ENCODE measurements at regions of chr6 and their contacts with region 1.

Region 1: DNA sequence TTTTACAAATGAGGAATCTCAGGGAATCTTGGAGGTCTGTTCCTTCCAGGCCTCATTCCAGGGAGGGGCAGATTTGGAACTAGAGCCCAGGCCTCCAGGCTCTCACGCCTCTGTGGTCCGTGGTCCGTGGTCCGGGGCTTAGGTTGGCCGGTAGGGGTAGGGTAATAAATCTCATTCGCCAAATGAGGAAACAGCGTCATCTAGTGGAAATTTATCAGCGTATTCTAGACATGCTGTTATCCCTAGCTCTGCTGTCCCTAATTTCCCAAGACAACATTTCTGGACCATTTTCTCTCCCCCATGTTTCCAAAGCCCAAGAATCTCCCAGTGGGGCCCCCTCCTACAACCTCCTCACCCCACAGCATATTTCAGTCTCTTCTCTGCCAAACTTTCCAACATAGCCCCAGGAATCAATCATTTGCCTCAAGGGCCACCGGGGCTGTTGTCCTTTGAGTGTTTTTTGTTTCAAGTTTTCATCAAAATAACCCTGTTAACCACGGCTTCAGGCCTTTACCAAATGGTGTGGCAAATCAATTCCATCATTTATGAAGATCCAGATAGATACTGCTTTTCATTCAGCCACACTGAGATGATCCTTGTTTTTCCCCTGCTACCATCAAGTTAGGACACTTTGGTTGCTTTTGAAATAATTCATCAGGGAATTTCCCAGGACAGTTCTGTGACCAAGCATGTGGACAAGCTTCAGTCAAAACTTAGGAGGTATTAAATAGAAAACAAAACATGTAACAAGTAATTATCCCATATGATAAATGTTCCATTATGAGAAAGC is 126.8 kb downstream of the ALDH8A1 start:
- DNase-seq: peak; percentile 88
- H3K4me3 Mint-ChIP-seq: no peak overlapping the region
- H3K27ac Mint-ChIP-seq: no peak overlapping the region
- H3K4me1 Mint-ChIP-seq: peaks cover 27% of the 10 kb centered on the region
- H3K27me3 Mint-ChIP-seq: no peaks in the 10 kb centered on the region
- CTCF ChIP-seq: peak; percentile 82

Region 2: DNA sequence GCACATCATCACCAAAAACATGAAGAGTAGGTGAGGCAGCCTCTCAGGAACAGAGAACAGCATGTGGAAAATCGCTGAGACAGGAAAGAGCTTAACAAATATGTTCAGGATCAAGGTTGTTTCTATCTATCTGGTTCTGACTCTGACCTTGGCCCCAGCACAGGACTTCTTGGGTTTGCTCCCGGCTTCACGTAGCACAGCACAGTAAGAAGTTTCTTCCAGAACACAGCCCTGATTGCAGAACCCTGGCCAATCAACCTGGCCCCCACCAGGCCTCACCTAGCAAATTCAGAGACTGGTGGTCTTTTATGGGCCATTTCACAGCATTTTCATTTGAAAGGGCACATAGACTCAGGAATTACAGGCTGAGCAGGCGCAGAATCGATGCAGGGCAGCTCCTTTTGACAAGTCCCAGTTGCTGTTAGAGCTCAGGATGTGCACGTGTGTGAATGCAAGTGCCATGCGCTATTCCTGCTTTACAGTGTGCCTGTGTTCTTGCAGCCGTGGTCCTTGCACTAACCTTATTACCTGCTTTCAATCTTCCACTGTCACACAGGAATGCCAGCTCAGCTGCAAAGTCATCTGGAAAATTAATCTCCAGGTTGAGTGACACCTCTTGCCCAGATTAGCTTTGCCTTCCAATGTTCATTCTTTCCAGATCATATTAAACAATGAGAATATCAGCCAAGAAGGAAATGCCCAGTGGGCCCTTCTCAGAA is 670.2 kb before region 1 on chr6:
- CTCF ChIA-PET with region 1: interaction called, 84 read pairs
- POLR2A ChIA-PET with region 1: interaction called, 6 read pairs
- intact Hi-C with region 1: loop called (anchors 1 kb)
- DNase-seq: no peak
- H3K4me3 Mint-ChIP-seq: no peak overlapping the region
- H3K27ac Mint-ChIP-seq: no peak overlapping the region
- H3K4me1 Mint-ChIP-seq: no peaks in the 10 kb centered on the region
- H3K27me3 Mint-ChIP-seq: no peaks in the 10 kb centered on the region
- CTCF ChIP-seq: no peak

Region 3: GRCh38 chr6:134174672-134175198 is 648.4 kb before region 1 on chr6:
- CTCF ChIA-PET with region 1: interaction called, 42 read pairs
- POLR2A ChIA-PET with region 1: interaction called, 15 read pairs
- intact Hi-C with region 1: loop called (anchors 1 kb)
- DNase-seq: peak; percentile 88
- H3K4me3 Mint-ChIP-seq: peak overlapping the region; percentile 95
- H3K27ac Mint-ChIP-seq: peak overlapping the region; percentile 92
- H3K4me1 Mint-ChIP-seq: peaks cover 43% of the 10 kb centered on the region
- H3K27me3 Mint-ChIP-seq: no peaks in the 10 kb centered on the region
- CTCF ChIP-seq: no peak

Region 4: DNA sequence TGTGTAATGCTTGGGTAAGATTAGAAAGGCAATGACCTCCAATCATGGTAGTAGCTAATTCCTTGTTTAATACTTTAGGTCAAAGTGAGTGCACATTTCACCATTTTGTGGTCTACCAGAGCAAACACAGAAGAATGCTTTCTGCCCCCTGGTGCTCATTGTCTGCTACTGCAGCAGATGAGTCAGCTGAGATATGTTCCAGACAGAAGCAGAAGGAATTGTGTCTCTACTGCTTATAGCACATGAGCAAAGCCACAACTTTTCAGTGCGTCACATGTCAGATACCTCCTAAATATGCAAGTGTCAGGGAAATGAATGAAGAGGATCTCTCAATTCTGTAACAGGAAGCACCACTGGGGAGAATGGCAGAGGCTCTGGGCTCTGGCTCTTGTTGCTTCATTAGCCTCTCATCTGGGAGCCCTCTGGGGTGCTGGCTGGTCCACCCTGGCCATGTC is 182.1 kb before region 1 on chr6:
- CTCF ChIA-PET with region 1: interaction called, 24 read pairs
- POLR2A ChIA-PET with region 1: interaction called, 10 read pairs
- intact Hi-C with region 1: loop called (anchors 1 kb)
- DNase-seq: peak; percentile 95
- H3K4me3 Mint-ChIP-seq: no peak overlapping the region
- H3K27ac Mint-ChIP-seq: peak overlapping the region; percentile 81
- H3K4me1 Mint-ChIP-seq: peaks cover 25% of the 10 kb centered on the region
- H3K27me3 Mint-ChIP-seq: no peaks in the 10 kb centered on the region
- CTCF ChIP-seq: peak; percentile 79

Region 5: GRCh38 chr6:134764741-134765140 is 58.4 kb before region 1 on chr6:
- CTCF ChIA-PET with region 1: no interaction called
- POLR2A ChIA-PET with region 1: no interaction called
- intact Hi-C with region 1: no loop called
- DNase-seq: no peak
- H3K4me3 Mint-ChIP-seq: no peak overlapping the region
- H3K27ac Mint-ChIP-seq: no peak overlapping the region
- H3K4me1 Mint-ChIP-seq: no peaks in the 10 kb centered on the region
- H3K27me3 Mint-ChIP-seq: no peaks in the 10 kb centered on the region
- CTCF ChIP-seq: no peak

Region 6: GRCh38 chr6:134908906-134909516 is 85.9 kb after region 1 on chr6:
- CTCF ChIA-PET with region 1: interaction called, 3 read pairs
- POLR2A ChIA-PET with region 1: interaction called, 25 read pairs
- intact Hi-C with region 1: loop called (anchors 1 kb)
- DNase-seq: peak; percentile 98
- H3K4me3 Mint-ChIP-seq: peak overlapping the region; percentile 28
- H3K27ac Mint-ChIP-seq: peak overlapping the region; percentile 81
- H3K4me1 Mint-ChIP-seq: peaks cover 31% of the 10 kb centered on the region
- H3K27me3 Mint-ChIP-seq: no peaks in the 10 kb centered on the region
- CTCF ChIP-seq: no peak